ENCODE measurements at regions of chr12 and their contacts with region 1.

Region 1: GRCh38 chr12:25436203-25437030 is 116.7 kb downstream of the LMNTD1 start:
- DNase-seq: no peak
- ATAC-seq: no peak
- H3K4me3 Mint-ChIP-seq: no peak overlapping the region
- H3K27ac Mint-ChIP-seq: no peak overlapping the region
- H3K4me1 Mint-ChIP-seq: peaks cover 4% of the 10 kb centered on the region
- H3K27me3 Mint-ChIP-seq: no peaks in the 10 kb centered on the region
- CTCF ChIP-seq: peak; percentile 64

Region 2: GRCh38 chr12:25404955-25405354 is 31.5 kb before region 1 on chr12:
- CTCF ChIA-PET with region 1: no interaction called
- POLR2A ChIA-PET with region 1: no interaction called
- intact Hi-C with region 1: no loop called
- DNase-seq: no peak
- ATAC-seq: no peak
- H3K4me3 Mint-ChIP-seq: no peak overlapping the region
- H3K27ac Mint-ChIP-seq: no peak overlapping the region
- H3K4me1 Mint-ChIP-seq: no peaks in the 10 kb centered on the region
- H3K27me3 Mint-ChIP-seq: no peaks in the 10 kb centered on the region
- CTCF ChIP-seq: no peak

Region 3: GRCh38 chr12:25504744-25505143 is 68.3 kb after region 1 on chr12:
- CTCF ChIA-PET with region 1: no interaction called
- POLR2A ChIA-PET with region 1: no interaction called
- intact Hi-C with region 1: no loop called
- DNase-seq: no peak
- ATAC-seq: no peak
- H3K4me3 Mint-ChIP-seq: no peak overlapping the region
- H3K27ac Mint-ChIP-seq: no peak overlapping the region
- H3K4me1 Mint-ChIP-seq: no peaks in the 10 kb centered on the region
- H3K27me3 Mint-ChIP-seq: peaks cover 8% of the 10 kb centered on the region
- CTCF ChIP-seq: no peak

Region 4: GRCh38 chr12:25557830-25558436 is 121.5 kb after region 1 on chr12:
- CTCF ChIA-PET with region 1: interaction called, 3 read pairs
- POLR2A ChIA-PET with region 1: no interaction called
- intact Hi-C with region 1: loop called (anchors 1 kb)
- DNase-seq: no peak
- ATAC-seq: no peak
- H3K4me3 Mint-ChIP-seq: no peak overlapping the region
- H3K27ac Mint-ChIP-seq: no peak overlapping the region
- H3K4me1 Mint-ChIP-seq: no peaks in the 10 kb centered on the region
- H3K27me3 Mint-ChIP-seq: peaks cover 4% of the 10 kb centered on the region
- CTCF ChIP-seq: no peak

Region 5: DNA sequence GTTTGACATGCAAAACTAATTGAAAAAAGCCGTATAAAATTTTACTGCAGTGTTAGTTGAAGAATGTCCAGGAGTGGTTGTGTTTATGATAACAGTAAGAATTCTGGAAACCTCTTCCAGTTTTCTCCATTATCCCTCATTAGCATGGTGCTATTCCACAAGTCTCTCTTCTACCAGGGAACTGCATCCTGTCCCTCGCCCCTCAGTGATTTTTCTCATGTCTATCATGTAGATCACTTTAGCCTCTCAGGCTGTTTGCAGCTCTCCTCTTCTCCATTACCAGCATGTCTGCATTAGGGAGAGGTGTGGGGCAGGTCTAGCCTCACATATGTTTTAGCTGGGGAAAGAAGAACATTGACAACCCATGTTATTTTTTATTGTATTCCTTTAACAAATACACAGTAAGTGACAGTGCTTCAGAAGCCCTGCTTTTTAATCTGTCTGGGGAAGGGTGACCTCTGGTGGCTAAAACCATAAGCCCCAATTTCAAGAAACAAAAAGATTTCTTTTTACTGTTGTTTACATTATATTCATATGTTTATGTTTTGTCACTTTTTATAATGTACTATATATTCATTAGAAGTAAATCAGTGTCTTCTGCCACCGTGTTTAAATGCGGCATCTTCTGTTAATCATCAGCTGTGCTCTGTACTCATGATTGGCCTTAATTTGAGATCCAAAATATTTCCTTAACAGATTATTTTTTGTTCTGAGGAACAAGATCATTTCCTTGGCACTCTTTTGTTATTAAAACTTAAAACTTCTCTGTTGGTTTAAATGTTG is 592.7 kb after region 1 on chr12:
- CTCF ChIA-PET with region 1: interaction called, 25 read pairs
- POLR2A ChIA-PET with region 1: no interaction called
- intact Hi-C with region 1: loop called (anchors 1 kb)
- DNase-seq: no peak
- ATAC-seq: no peak
- H3K4me3 Mint-ChIP-seq: no peak overlapping the region
- H3K27ac Mint-ChIP-seq: no peak overlapping the region
- H3K4me1 Mint-ChIP-seq: no peaks in the 10 kb centered on the region
- H3K27me3 Mint-ChIP-seq: peaks cover 5% of the 10 kb centered on the region
- CTCF ChIP-seq: peak; percentile 96

Region 6: DNA sequence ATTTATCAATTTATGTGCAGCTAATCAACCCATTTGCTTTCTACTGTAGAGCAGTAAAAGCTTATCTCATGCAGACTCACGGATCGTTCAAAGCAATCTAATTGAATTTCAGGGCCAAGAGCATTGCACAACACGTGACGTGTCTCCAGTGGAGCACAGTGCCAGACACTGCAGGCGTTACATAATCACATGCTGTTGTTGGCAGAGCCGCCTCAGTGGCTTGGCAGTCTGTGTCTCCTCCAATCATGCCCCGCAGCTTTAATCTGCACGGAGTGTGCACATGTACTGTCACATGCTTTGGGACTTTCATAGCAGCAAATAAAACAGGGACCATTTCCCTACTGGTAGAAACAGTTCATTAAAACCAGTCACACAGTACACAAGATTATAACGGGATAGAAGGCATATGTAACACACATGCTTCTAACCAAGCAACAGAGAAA is 1087.3 kb after region 1 on chr12:
- CTCF ChIA-PET with region 1: no interaction called
- POLR2A ChIA-PET with region 1: no interaction called
- intact Hi-C with region 1: loop called (anchors 1 kb)
- DNase-seq: no peak
- ATAC-seq: no peak
- H3K4me3 Mint-ChIP-seq: no peak overlapping the region
- H3K27ac Mint-ChIP-seq: no peak overlapping the region
- H3K4me1 Mint-ChIP-seq: peaks cover 20% of the 10 kb centered on the region
- H3K27me3 Mint-ChIP-seq: no peaks in the 10 kb centered on the region
- CTCF ChIP-seq: no peak

Region 7: GRCh38 chr12:26651566-26652188 is 1215.3 kb after region 1 on chr12:
- CTCF ChIA-PET with region 1: interaction called, 15 read pairs
- POLR2A ChIA-PET with region 1: no interaction called
- intact Hi-C with region 1: loop called (anchors 1 kb)
- DNase-seq: no peak
- ATAC-seq: peak; percentile 62
- H3K4me3 Mint-ChIP-seq: no peak overlapping the region
- H3K27ac Mint-ChIP-seq: no peak overlapping the region
- H3K4me1 Mint-ChIP-seq: no peaks in the 10 kb centered on the region
- H3K27me3 Mint-ChIP-seq: no peaks in the 10 kb centered on the region
- CTCF ChIP-seq: no peak

Region 8: GRCh38 chr12:26884765-26885576 is 1448.6 kb after region 1 on chr12:
- CTCF ChIA-PET with region 1: no interaction called
- POLR2A ChIA-PET with region 1: no interaction called
- intact Hi-C with region 1: loop called (anchors 10 kb)
- DNase-seq: peak; percentile 45
- ATAC-seq: peak; percentile 96
- H3K4me3 Mint-ChIP-seq: peak overlapping the region; percentile 76
- H3K27ac Mint-ChIP-seq: peak overlapping the region; percentile 54
- H3K4me1 Mint-ChIP-seq: peaks cover 8% of the 10 kb centered on the region
- H3K27me3 Mint-ChIP-seq: no peaks in the 10 kb centered on the region
- CTCF ChIP-seq: peak; percentile 86

Measured in activated B cell treated with CpG ODN at 0.5 μM for 24 hours (primary cell).